Mucosa of descending colon (tissue), 3 donors: ENCODE measurements at regions of chr1 and their contacts with region 1.

Region 1: DNA sequence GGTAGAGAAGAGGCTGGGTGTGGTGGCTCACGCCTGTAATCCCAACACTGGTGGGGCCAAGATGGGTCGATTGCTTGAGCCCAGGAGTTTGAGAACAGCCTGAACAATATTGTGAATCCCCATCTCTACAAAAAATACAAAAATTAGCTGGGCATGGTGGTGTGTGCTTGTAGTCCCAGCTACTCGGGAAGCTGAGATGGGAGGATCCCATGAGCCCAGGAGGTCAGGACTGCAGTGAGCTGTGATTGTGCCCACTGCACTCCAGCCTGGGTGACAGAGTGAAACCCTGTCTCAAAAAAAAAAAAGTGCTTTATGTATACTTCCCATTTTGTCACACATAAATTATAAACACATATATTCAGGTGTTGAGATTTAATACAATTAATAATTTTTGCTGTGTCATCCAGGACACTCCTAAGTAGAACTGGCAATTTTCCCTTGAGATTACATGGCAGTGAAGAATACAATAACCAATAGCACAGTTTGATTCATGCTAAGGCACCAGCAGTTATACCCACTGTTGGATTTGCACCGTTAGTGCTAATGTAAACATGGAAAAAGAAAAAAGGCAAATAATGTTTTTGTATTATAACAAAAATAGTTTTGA is 15.5 kb downstream of the GABPB2 start:
- DNase-seq: no peak
- ATAC-seq: no peak
- H3K4me3 ChIP-seq: no peak overlapping the region
- H3K4me1 ChIP-seq: no peaks in the 10 kb centered on the region
- CTCF ChIP-seq: no peak

Region 2: DNA sequence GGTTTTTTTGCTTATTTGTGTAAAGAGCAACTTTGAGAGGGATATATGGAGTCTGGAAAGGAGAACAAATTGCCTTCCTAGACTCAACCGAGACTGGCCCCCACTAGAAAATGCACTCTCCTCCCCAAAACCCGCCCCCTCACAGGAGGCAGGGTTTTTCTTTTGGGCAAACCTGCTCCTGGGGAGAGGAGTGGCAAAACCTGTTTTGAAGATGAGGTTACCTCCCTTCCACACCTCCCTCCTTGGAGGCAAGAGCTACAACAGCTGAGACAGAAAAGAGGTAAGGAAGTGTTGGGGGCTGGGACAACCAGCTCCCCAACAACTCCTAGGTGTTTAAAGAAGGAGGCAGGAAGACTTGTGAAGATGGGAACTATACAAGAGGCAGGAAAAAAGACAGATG is 49.7 kb before region 1 on chr1 and contains the start of gene BNIPL:
- intact Hi-C with region 1: loop called in 1 of 2 experiments (anchors 5 kb)
- DNase-seq: no peak
- ATAC-seq: no peak
- H3K4me3 ChIP-seq: no peak within 1 kb of the TSS
- H3K4me1 ChIP-seq: no peaks in the 10 kb centered on the region
- CTCF ChIP-seq: no peak
- total RNA-seq, gene BNIPL: 0.41 to 1.1 (median 0.63) TPM

Region 3: GRCh38 chr1:151130987-151131586 is 45.0 kb after region 1 on chr1:
- intact Hi-C with region 1: no loop called
- DNase-seq: peak; percentile 85 to 87 (median 86)
- ATAC-seq: peak; percentile 93
- H3K4me3 ChIP-seq: no peak overlapping the region
- H3K4me1 ChIP-seq: no peaks in the 10 kb centered on the region
- CTCF ChIP-seq: no peak